ENCODE measurements at regions of chr2 and their contacts with region 1.

Region 1: GRCh38 chr2:159030674-159031380 is 62.4 kb downstream of the TANC1 start:
- DNase-seq: peak; percentile 31
- H3K4me3 Mint-ChIP-seq: no peak overlapping the region
- H3K27ac Mint-ChIP-seq: peak overlapping the region; percentile 69
- H3K4me1 Mint-ChIP-seq: peaks cover 32% of the 10 kb centered on the region
- H3K27me3 Mint-ChIP-seq: no peaks in the 10 kb centered on the region
- CTCF ChIP-seq: no peak

Region 2: GRCh38 chr2:158998551-158999248 is 32.1 kb before region 1 on chr2:
- CTCF ChIA-PET with region 1: interaction called, 16 read pairs
- POLR2A ChIA-PET with region 1: interaction called, 3 read pairs
- intact Hi-C with region 1: no loop called
- DNase-seq: peak; percentile 70
- H3K4me3 Mint-ChIP-seq: peak overlapping the region; percentile 28
- H3K27ac Mint-ChIP-seq: peak overlapping the region; percentile 83
- H3K4me1 Mint-ChIP-seq: peaks cover 18% of the 10 kb centered on the region
- H3K27me3 Mint-ChIP-seq: no peaks in the 10 kb centered on the region
- CTCF ChIP-seq: no peak